ENCODE measurements at regions of chr3 and their contacts with region 1.

Region 1: GRCh38 chr3:17032407-17033034 is 147.8 kb downstream of the PLCL2 start:
- DNase-seq: no peak
- H3K4me3 ChIP-seq: no peak overlapping the region
- H3K27ac ChIP-seq: no peak overlapping the region
- H3K4me1 ChIP-seq: peaks cover 6% of the 10 kb centered on the region
- H3K27me3 ChIP-seq: no peaks in the 10 kb centered on the region
- CTCF ChIP-seq: peak; percentile 71

Region 2: DNA sequence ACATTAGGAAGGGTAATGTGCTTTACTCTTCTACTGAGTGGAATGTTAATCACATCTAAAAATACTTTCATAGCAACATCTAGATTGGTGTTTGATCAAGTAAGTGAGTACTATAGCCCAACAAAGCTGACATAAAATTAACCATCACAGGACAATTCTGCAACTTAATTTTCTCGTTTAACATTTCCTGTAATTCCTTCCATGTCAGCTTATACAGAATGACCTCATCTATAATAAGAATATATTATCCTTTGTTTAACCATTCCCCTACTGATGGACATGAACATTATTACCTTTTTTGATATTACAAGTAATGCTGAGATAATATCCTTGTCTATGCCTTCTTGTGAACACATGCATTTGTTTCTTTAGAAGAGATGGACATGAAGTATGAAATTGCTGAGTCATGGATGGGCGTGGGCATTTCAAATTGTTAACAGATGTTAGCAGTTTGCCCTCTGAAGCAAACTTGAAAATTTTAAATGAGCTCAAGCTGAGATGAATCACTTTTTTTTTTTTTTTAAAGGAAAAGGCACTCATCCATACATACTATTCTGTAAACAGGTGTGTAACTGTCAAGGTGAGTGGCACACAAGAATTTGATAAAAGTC is 682.4 kb before region 1 on chr3:
- CTCF ChIA-PET with region 1: no interaction called
- POLR2A ChIA-PET with region 1: no interaction called
- intact Hi-C with region 1: no loop called
- DNase-seq: peak in 1 of 2 experiments; percentile 3
- H3K4me3 ChIP-seq: no peak overlapping the region
- H3K27ac ChIP-seq: peak overlapping the region; percentile 2; the same call in 1 of the 2 replicates
- H3K4me1 ChIP-seq: peaks cover 9% of the 10 kb centered on the region
- H3K27me3 ChIP-seq: no peaks in the 10 kb centered on the region
- CTCF ChIP-seq: no peak

Region 3: DNA sequence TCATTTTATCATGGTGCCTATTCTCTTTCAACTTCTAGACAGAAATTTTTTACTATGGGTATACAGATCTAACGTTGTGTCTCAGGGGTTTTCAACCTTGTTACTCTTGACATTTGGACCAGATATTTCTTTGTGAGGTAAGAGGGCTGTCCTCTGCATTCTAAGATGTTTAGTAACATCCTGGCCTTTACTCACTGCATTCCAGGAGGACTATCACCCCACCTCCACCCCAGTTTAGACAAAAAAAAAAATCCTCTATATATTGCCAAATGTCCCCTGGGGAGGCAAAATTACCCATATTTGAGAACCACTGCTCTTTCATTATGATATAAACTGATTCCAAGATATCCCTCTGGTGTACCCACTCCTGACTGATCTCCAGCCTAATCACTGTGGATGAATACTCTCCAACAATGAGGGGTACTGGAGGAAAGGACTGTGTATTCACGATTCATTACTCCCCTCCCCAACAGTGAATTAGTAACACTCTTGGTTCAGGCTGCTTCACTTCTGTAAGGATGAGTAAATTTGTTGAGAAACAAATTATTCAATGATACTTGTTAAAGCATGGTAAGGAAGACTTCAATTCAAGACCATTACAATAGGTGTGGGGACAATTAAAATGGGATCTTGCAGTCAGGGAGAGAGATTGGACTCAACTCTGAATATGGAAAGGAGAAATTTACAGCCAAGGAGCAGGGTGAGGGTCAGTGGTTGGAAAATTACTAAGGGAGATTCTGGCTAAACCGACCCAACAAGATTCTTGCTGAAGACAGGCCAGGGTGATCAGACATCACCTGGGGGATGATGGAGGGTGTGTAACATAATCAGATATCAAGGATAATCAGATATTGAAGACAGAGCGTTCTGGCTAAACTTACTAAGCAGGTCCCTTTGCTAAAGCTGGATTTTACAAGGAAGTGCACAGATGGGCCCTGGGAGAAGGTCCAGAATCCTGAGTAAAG is 303.5 kb before region 1 on chr3:
- CTCF ChIA-PET with region 1: interaction called, 3 read pairs
- POLR2A ChIA-PET with region 1: no interaction called
- intact Hi-C with region 1: loop called (anchors 1 kb)
- DNase-seq: peak; percentile 45 to 76
- H3K4me3 ChIP-seq: peak overlapping the region; percentile 36
- H3K27ac ChIP-seq: peak overlapping the region; percentile 95
- H3K4me1 ChIP-seq: peaks cover 38% of the 10 kb centered on the region
- H3K27me3 ChIP-seq: no peaks in the 10 kb centered on the region
- CTCF ChIP-seq: no peak

Region 4: GRCh38 chr3:17233398-17233800 is 200.9 kb after region 1 on chr3:
- CTCF ChIA-PET with region 1: no interaction called
- POLR2A ChIA-PET with region 1: no interaction called
- intact Hi-C with region 1: loop called (anchors 10 kb)
- DNase-seq: peak; percentile 6 to 69
- H3K4me3 ChIP-seq: no peak overlapping the region
- H3K27ac ChIP-seq: no peak overlapping the region
- H3K4me1 ChIP-seq: peaks cover 14% of the 10 kb centered on the region
- H3K27me3 ChIP-seq: no peaks in the 10 kb centered on the region
- CTCF ChIP-seq: peak; percentile 89

Measured in PC-9 (cell line).